ENCODE measurements at regions of chr6 and their contacts with region 1.

Region 1: GRCh38 chr6:97186416-97186999 is 96.5 kb downstream of the MMS22L start:
- DNase-seq: peak; percentile 9 to 64
- H3K4me3 ChIP-seq: no peak overlapping the region
- H3K27ac ChIP-seq: no peak overlapping the region
- H3K4me1 ChIP-seq: no peaks in the 10 kb centered on the region
- H3K27me3 ChIP-seq: no peaks in the 10 kb centered on the region
- CTCF ChIP-seq: peak; percentile 15 to 90 (median 76)
- EP300 ChIP-seq: no peak
- POLR2A ChIP-seq: no peak
- RAD21 ChIP-seq: peak; percentile 86 to 89

Region 2: GRCh38 chr6:97128507-97128906 is 58.0 kb before region 1 on chr6:
- CTCF ChIA-PET with region 1: interaction called, 12 read pairs
- POLR2A ChIA-PET with region 1: no interaction called
- DNase-seq: no peak
- H3K4me3 ChIP-seq: no peak overlapping the region
- H3K27ac ChIP-seq: no peak overlapping the region
- H3K4me1 ChIP-seq: no peaks in the 10 kb centered on the region
- H3K27me3 ChIP-seq: no peaks in the 10 kb centered on the region
- CTCF ChIP-seq: no peak
- EP300 ChIP-seq: no peak
- POLR2A ChIP-seq: no peak
- RAD21 ChIP-seq: no peak

Region 3: DNA sequence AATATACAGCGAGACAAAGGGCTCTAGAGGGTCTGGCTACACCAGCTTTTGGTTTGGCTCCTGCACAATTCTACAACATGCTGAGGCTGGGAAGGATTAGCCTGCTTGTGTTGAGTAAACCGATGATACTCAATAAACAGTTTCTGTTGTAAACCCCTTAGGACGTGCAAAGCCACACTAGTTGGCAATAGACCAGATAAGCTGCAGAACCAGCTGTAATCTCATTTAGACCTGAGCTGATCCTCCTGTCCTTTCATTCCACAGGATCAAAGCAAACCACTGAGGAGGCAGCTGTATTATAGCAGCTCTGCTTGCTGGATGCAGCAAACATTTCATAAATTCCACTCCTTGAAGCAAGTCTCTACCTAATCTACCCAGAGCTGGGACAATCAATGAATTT is 16.8 kb after region 1 on chr6:
- CTCF ChIA-PET with region 1: interaction called, 57 read pairs
- POLR2A ChIA-PET with region 1: no interaction called
- DNase-seq: no peak
- H3K4me3 ChIP-seq: no peak overlapping the region
- H3K27ac ChIP-seq: no peak overlapping the region
- H3K4me1 ChIP-seq: peaks cover 0 to 3% (median 0%) of the 10 kb centered on the region in 4 experiments; a peak in 2 of 7 replicates
- H3K27me3 ChIP-seq: no peaks in the 10 kb centered on the region
- CTCF ChIP-seq: no peak
- EP300 ChIP-seq: no peak
- POLR2A ChIP-seq: no peak
- RAD21 ChIP-seq: no peak

Region 4: GRCh38 chr6:97364327-97364726 is 177.8 kb after region 1 on chr6:
- CTCF ChIA-PET with region 1: no interaction called
- POLR2A ChIA-PET with region 1: no interaction called
- DNase-seq: no peak
- H3K4me3 ChIP-seq: no peak overlapping the region
- H3K27ac ChIP-seq: no peak overlapping the region
- H3K4me1 ChIP-seq: no peaks in the 10 kb centered on the region
- H3K27me3 ChIP-seq: no peaks in the 10 kb centered on the region
- CTCF ChIP-seq: no peak
- EP300 ChIP-seq: no peak
- POLR2A ChIP-seq: no peak
- RAD21 ChIP-seq: no peak

Region 5: DNA sequence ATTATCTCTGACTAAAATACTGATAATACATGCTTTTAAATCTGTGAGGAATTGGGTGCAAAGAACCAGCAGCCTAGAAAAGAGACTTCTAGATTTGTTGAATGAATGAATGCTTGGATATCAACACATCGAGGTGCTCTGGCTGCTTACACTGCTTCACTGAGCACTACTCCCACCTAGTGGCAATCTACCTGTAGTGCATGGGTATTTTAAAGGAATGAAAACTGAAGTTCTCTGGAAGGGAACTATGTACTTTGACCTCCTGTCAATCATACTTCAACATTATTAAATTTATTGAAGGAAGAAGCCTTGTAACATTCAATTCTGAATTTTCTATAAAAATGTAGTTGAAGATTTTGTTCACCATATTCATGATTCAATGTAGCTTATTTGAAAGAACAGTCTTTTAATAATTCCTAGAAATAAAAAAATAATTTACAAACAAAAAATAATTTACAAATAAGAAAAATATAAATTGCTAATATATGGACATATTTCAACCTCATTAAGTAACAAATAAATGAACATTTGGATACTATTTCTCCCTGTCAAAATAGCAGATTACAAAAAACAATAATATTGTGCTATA is 207.7 kb after region 1 on chr6:
- CTCF ChIA-PET with region 1: interaction called, 17 read pairs
- POLR2A ChIA-PET with region 1: no interaction called
- DNase-seq: no peak
- H3K4me3 ChIP-seq: no peak overlapping the region
- H3K27ac ChIP-seq: no peak overlapping the region
- H3K4me1 ChIP-seq: no peaks in the 10 kb centered on the region
- H3K27me3 ChIP-seq: no peaks in the 10 kb centered on the region
- CTCF ChIP-seq: peak in 2 of 3 experiments; percentile 83; a peak in 3 of 4 replicates
- EP300 ChIP-seq: no peak
- POLR2A ChIP-seq: no peak
- RAD21 ChIP-seq: peak; percentile 95

Region 6: GRCh38 chr6:97978855-97979271 is 792.4 kb after region 1 on chr6:
- CTCF ChIA-PET with region 1: no interaction called
- POLR2A ChIA-PET with region 1: no interaction called
- DNase-seq: peak in 1 of 2 experiments; percentile 77
- H3K4me3 ChIP-seq: no peak overlapping the region; a peak in 1 of 8 replicates
- H3K27ac ChIP-seq: no peak overlapping the region
- H3K4me1 ChIP-seq: no peaks in the 10 kb centered on the region
- H3K27me3 ChIP-seq: no peaks in the 10 kb centered on the region
- CTCF ChIP-seq: peak; percentile 47 to 52 (median 48)
- EP300 ChIP-seq: no peak
- POLR2A ChIP-seq: no peak
- RAD21 ChIP-seq: peak; percentile 54 to 63

Measured in H1 (cell line).